ENCODE measurements at regions of chr20 and their contacts with region 1.

Region 1: GRCh38 chr20:45771182-45771759 is 20.4 kb downstream of the WFDC3 start:
- DNase-seq: peak; percentile 68
- H3K4me3 ChIP-seq: no peak overlapping the region
- H3K27ac ChIP-seq: peak overlapping the region; percentile 39
- H3K27me3 ChIP-seq: peaks cover 23% of the 10 kb centered on the region
- CTCF ChIP-seq: peak; percentile 95

Region 2: GRCh38 chr20:45044084-45044573 is 727.1 kb before region 1 on chr20:
- CTCF ChIA-PET with region 1: interaction called, 16 read pairs
- POLR2A ChIA-PET with region 1: no interaction called
- DNase-seq: peak; percentile 55
- H3K4me3 ChIP-seq: no peak overlapping the region
- H3K27ac ChIP-seq: no peak overlapping the region
- H3K27me3 ChIP-seq: no peaks in the 10 kb centered on the region
- CTCF ChIP-seq: peak; percentile 94

Region 3: GRCh38 chr20:45322952-45323383 is 448.3 kb before region 1 on chr20:
- CTCF ChIA-PET with region 1: interaction called, 79 read pairs
- POLR2A ChIA-PET with region 1: no interaction called
- DNase-seq: no peak
- H3K4me3 ChIP-seq: no peak overlapping the region
- H3K27ac ChIP-seq: peak overlapping the region; percentile 31
- H3K27me3 ChIP-seq: no peaks in the 10 kb centered on the region
- CTCF ChIP-seq: no peak

Region 4: DNA sequence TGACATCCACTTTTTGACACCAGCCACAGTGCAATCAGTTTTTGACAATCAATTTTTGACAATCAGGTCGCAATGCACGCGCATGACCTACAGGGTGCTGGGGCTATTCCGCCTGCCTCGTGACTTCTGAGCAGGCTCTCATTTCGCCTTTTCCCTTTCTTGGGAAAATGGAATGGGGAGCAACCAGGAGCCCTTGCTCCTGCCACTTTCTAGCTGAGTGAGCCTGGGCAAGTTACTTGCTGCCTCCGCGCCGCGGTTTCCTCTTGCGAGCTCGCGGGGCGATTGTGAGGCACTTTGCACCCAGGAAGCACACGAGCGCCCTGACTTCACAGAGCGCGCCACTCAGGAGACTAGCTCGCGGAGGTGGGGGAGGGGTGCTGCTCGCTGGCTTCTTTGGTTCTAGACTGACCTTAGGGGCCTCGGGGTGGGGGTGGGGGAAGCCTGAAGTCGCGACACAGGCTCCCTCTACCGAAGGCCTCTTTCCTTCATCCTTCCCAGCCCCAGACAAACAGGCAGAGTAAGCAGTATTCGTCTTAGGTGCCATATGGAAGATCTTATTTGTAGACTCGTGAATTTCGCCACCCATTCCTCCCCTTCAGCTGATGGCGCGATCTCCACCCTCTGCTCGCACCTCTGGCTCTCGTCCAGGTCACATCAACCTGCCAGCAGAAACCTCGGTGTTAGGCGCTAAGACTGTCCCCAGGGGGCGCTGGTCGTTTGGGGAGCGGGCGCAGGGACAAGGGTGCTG is 397.7 kb before region 1 on chr20:
- CTCF ChIA-PET with region 1: interaction called, 60 read pairs
- POLR2A ChIA-PET with region 1: no interaction called
- DNase-seq: no peak
- H3K4me3 ChIP-seq: peak overlapping the region; percentile 52
- H3K27ac ChIP-seq: no peak overlapping the region
- H3K27me3 ChIP-seq: no peaks in the 10 kb centered on the region
- CTCF ChIP-seq: peak; percentile 88

Region 5: DNA sequence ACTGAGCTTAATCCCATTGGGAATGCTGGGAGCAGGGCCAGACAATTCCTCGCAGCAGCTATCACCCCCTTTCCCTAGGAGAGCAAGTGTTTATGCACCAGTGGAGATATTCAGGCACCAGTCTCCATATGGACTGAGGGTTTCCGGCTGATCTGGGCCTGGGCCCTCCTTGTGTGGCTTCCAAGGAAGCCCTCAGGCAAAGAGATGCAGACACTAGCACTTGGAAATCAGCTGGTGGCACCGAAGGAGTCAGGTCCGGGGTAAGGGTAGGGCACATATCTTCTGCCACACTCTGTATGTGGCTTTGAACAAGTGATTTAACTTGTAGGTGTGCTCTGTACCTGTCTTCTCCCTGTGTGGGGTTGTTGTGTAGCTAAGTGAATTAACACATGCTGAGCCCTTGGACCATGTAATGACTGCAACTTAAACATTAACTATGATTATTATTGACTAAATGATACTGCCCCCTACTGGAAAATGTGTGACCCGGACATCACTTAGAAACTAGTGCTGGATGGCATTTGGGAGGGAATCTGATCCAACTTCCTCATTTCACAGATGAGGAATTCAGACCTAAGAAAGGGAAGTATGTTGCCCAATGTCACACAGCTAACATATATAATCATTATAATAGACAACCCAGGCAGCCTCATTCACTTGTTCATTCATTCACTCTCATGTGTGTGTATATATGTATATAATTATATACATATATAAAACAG is 321.0 kb before region 1 on chr20:
- CTCF ChIA-PET with region 1: interaction called, 17 read pairs
- POLR2A ChIA-PET with region 1: no interaction called
- DNase-seq: no peak
- H3K4me3 ChIP-seq: no peak overlapping the region
- H3K27ac ChIP-seq: no peak overlapping the region
- H3K27me3 ChIP-seq: peaks cover 18% of the 10 kb centered on the region
- CTCF ChIP-seq: peak; percentile 62

Region 6: DNA sequence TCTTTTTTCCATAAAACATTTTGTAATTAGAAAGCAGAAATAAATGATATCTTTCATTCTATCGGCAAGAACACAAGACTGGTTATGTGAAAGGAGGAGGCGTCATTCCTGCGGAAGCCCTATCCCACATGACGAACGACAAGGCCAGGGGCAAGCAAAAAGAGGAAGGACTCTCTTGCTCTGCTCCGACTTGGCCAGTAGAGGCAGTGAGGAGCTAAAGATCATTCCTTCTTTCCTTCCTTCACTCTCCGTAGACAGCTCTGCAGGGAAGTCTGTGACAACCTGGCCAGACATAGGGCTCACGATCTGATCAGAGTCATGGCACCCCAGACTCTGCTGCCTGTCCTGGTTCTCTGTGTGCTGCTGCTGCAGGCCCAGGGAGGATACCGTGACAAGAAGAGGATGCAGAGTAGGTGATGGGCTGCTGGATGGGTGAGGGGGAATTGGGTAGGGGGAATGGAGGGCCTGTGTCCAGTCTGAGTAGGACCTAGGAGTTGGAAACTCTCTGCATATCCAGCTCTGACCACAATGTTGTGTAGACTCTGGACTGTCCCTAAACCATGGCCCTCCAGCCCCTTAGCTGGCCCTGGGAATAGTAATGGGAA is 141.7 kb before region 1 on chr20 and contains the start of gene WFDC10A:
- CTCF ChIA-PET with region 1: interaction called, 16 read pairs
- POLR2A ChIA-PET with region 1: no interaction called
- DNase-seq: no peak
- H3K4me3 ChIP-seq: no peak within 1 kb of the TSS
- H3K27ac ChIP-seq: no peak within 1 kb of the TSS
- H3K27me3 ChIP-seq: no peaks in the 10 kb centered on the region
- CTCF ChIP-seq: peak; percentile 75
- polyA plus RNA-seq, gene WFDC10A: not detected in 2 replicates

Region 7: GRCh38 chr20:45798935-45799642 is 27.8 kb after region 1 on chr20:
- CTCF ChIA-PET with region 1: interaction called, 12 read pairs
- POLR2A ChIA-PET with region 1: no interaction called
- DNase-seq: no peak
- H3K4me3 ChIP-seq: no peak overlapping the region
- H3K27ac ChIP-seq: no peak overlapping the region
- H3K27me3 ChIP-seq: no peaks in the 10 kb centered on the region
- CTCF ChIP-seq: peak; percentile 79

Region 8: DNA sequence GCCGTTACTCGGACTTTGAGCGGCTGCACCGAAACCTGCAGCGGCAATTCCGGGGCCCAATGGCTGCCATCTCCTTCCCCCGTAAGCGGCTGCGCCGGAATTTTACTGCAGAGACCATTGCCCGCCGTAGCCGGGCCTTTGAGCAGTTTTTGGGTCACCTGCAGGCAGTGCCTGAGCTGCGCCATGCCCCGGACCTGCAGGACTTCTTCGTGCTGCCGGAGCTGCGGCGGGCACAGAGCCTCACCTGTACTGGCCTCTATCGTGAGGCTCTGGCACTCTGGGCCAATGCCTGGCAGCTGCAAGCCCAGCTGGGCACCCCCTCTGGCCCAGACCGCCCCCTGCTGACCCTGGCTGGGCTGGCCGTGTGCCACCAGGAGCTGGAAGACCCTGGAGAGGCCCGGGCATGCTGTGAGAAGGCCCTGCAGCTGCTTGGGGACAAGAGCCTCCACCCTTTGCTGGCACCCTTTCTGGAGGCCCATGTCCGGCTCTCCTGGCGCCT is 69.5 kb after region 1 on chr20:
- CTCF ChIA-PET with region 1: no interaction called
- POLR2A ChIA-PET with region 1: no interaction called
- DNase-seq: no peak
- H3K4me3 ChIP-seq: no peak overlapping the region
- H3K27ac ChIP-seq: no peak overlapping the region
- H3K27me3 ChIP-seq: no peaks in the 10 kb centered on the region
- CTCF ChIP-seq: no peak

Region 9: DNA sequence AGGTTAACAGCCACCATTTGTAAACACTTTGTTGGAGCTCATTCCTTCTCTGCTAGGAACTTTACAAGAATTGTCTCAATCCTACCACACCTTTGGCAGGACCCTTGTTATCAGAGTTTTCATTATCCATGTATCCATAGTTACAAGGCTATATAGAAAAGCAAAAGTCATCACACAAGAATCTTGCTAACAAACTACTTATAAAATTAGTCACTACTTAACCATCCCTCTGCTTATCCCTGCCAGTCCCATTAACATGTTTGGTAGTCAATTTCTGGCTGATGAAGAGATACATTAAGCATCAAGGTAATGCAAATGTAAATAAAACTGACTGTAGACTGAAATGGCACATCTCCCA is 96.5 kb after region 1 on chr20:
- CTCF ChIA-PET with region 1: no interaction called
- POLR2A ChIA-PET with region 1: no interaction called
- DNase-seq: no peak
- H3K4me3 ChIP-seq: no peak overlapping the region
- H3K27ac ChIP-seq: peak overlapping the region; percentile 65
- H3K27me3 ChIP-seq: no peaks in the 10 kb centered on the region
- CTCF ChIP-seq: no peak